ENCODE measurements at regions of chr17 and their contacts with region 1.

Region 1: DNA sequence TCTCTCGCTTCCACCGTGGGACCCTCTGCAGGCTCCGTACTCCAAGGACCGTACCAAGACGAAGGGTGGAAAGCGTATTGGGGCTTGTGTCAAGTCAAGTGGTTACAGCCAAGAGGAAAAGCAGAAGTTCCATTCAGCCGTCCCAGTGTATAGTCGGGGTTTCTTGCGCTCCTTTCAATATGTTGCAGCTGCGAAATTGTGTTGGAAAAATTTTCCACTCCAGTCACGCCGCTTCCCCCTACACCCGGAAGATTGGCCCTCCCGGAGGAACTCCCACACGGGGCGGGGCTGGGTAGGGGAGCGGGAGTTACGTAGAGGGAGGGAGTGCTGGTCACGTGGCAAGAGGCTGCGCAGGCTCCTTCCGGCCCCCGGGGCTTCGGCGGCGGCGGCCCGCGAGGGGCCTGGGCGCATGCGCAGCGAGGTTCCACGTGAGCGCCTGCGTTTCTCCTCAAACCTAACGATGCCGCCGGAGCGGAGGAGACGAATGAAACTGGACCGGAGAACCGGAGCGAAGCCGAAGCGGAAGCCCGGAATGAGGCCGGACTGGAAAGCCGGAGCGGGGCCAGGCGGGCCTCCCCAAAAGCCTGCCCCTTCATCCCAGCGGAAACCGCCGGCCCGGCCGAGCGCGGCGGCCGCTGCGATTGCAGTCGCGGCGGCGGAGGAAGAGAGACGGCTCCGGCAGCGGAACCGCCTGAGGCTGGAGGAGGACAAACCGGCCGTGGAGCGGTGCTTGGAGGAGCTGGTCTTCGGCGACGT is at the start of gene UTP18:
- DNase-seq: peak; percentile 91 to 97 (median 95)
- H3K4me3 ChIP-seq: peak within 1 kb of the TSS; percentile 59 to 100 (median 98)
- H3K27ac ChIP-seq: peak within 1 kb of the TSS; percentile 95 to 100 (median 99)
- H3K27me3 ChIP-seq: no peaks in the 10 kb centered on the region
- CTCF ChIP-seq: peak in 4 of 56 donors; percentile 7 to 15 (median 12)
- total RNA-seq, gene UTP18: 21.6 to 44.1 (median 32.9) TPM

Region 2: GRCh38 chr17:51166197-51166986 is 93.9 kb before region 1 on chr17 and contains the start of gene NME2:
- intact Hi-C with region 1: loop called in 1 of 2 experiments (anchors 5 kb)
- DNase-seq: peak; percentile 57 to 85 (median 74)
- H3K4me3 ChIP-seq: peak within 1 kb of the TSS; percentile 75 to 97 (median 88)
- H3K27ac ChIP-seq: peak within 1 kb of the TSS; percentile 23 to 94 (median 88)
- H3K27me3 ChIP-seq: no peaks in the 10 kb centered on the region
- CTCF ChIP-seq: peak in 8 of 56 donors; percentile 9 to 23 (median 14)
- total RNA-seq, gene NME2: 99.4 to 250 (median 169) TPM

Region 3: GRCh38 chr17:51611585-51611984 is 351.3 kb after region 1 on chr17:
- intact Hi-C with region 1: no loop called
- DNase-seq: peak in 1 of 10 donors; percentile 10
- H3K4me3 ChIP-seq: no peak overlapping the region
- H3K27ac ChIP-seq: no peak overlapping the region
- H3K27me3 ChIP-seq: no peaks in the 10 kb centered on the region
- CTCF ChIP-seq: no peak